ENCODE measurements at regions of chr15 and their contacts with region 1.

Region 1: DNA sequence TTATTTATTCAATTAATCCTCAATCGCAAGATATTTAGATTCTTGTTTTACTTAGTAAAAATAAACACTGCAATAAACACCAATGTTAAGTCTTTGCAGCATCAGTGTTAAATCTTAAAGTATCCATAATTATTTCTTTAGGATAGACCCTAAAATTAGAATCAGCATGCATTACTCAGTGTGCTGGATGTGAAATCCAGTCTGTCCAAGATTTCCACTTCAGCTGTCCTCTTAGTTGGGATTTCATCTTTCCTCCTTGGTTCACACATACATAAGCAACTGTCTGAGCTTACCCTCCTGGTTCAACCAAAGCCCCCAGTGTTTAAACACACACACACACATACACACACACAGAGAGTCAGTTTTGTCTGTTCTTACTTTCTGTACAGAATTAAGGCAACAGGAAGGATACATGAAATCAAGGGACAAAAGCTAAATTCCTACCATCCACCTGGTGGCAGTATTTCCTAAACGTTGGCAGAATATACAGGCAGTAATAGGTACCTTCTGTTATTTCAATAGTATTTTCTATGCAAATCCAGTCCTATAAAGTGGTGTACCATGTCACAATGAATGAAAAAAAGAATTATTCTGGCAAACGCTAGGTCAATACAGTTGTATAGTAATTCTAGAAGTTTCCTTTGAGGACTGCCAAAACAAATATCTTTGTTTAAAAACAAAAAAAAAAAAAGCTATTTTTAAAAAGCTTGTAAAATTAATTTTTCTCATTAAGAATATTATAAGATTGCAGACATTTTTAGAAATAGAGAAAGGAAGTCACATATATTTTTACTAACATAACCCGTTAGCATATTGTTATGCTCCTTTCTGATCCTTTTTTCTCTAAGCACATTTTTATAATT is 27.3 kb upstream of the DMXL2 start:
- DNase-seq: peak; percentile 71
- H3K4me3 ChIP-seq: peak overlapping the region in 1 of 2 experiments; percentile 18; a peak in 1 of 4 replicates
- H3K27ac ChIP-seq: no peak overlapping the region
- H3K4me1 ChIP-seq: peaks cover 0 to 2% of the 10 kb centered on the region in 2 experiments; a peak in 2 of 4 replicates
- H3K27me3 ChIP-seq: no peaks in the 10 kb centered on the region
- CTCF ChIP-seq: peak; percentile 88
- EP300 ChIP-seq: no peak
- RAD21 ChIP-seq: peak; percentile 99

Region 2: GRCh38 chr15:51622604-51623370 is 27.1 kb before region 1 on chr15 and contains the start of gene DMXL2:
- CTCF ChIA-PET with region 1: interaction called, 10 read pairs
- POLR2A ChIA-PET with region 1: no interaction called
- DNase-seq: peak; percentile 95
- H3K4me3 ChIP-seq: peak within 1 kb of the TSS; percentile 85 to 96
- H3K27ac ChIP-seq: peak within 1 kb of the TSS; percentile 64 to 90
- H3K4me1 ChIP-seq: peaks cover 11 to 12% of the 10 kb centered on the region in 2 experiments; a peak in 3 of 4 replicates
- H3K27me3 ChIP-seq: no peaks in the 10 kb centered on the region
- CTCF ChIP-seq: no peak
- EP300 ChIP-seq: peak in 1 of 2 experiments; percentile 35; a peak in 1 of 4 replicates
- RAD21 ChIP-seq: no peak
- polyA plus RNA-seq, gene DMXL2: 6.4 and 8.9 TPM in 2 replicates

Region 3: GRCh38 chr15:51681303-51681963 is 31.5 kb after region 1 on chr15 and contains the start of gene SCG3:
- CTCF ChIA-PET with region 1: interaction called, 14 read pairs
- POLR2A ChIA-PET with region 1: interaction called, 5 read pairs
- DNase-seq: peak; percentile 80
- H3K4me3 ChIP-seq: peak within 1 kb of the TSS; percentile 31 to 48; a peak in 3 of 4 replicates
- H3K27ac ChIP-seq: peak within 1 kb of the TSS in 1 of 2 experiments; percentile 64; a peak in 2 of 4 replicates
- H3K4me1 ChIP-seq: peaks cover 0 to 5% of the 10 kb centered on the region in 2 experiments; a peak in 2 of 4 replicates
- H3K27me3 ChIP-seq: no peaks in the 10 kb centered on the region; the same call in 1 of the 2 replicates
- CTCF ChIP-seq: no peak
- EP300 ChIP-seq: no peak
- RAD21 ChIP-seq: peak; percentile 2; the same call in 1 of the 2 replicates
- polyA plus RNA-seq, gene SCG3: 0.16 and 0.41 TPM in 2 replicates

Region 4: GRCh38 chr15:51737280-51738017 is 87.6 kb after region 1 on chr15 and contains the start of gene LYSMD2:
- CTCF ChIA-PET with region 1: interaction called, 53 read pairs
- POLR2A ChIA-PET with region 1: no interaction called
- DNase-seq: peak; percentile 87
- H3K4me3 ChIP-seq: peak within 1 kb of the TSS; percentile 65 to 74
- H3K27ac ChIP-seq: peak within 1 kb of the TSS in 1 of 2 experiments; percentile 87; a peak in 2 of 4 replicates
- H3K4me1 ChIP-seq: peaks cover 0 to 23% of the 10 kb centered on the region in 2 experiments; a peak in 2 of 4 replicates
- H3K27me3 ChIP-seq: no peaks in the 10 kb centered on the region
- CTCF ChIP-seq: no peak
- EP300 ChIP-seq: no peak
- RAD21 ChIP-seq: no peak
- polyA plus RNA-seq, gene LYSMD2: 10.3 and 14.2 TPM in 2 replicates

Region 5: DNA sequence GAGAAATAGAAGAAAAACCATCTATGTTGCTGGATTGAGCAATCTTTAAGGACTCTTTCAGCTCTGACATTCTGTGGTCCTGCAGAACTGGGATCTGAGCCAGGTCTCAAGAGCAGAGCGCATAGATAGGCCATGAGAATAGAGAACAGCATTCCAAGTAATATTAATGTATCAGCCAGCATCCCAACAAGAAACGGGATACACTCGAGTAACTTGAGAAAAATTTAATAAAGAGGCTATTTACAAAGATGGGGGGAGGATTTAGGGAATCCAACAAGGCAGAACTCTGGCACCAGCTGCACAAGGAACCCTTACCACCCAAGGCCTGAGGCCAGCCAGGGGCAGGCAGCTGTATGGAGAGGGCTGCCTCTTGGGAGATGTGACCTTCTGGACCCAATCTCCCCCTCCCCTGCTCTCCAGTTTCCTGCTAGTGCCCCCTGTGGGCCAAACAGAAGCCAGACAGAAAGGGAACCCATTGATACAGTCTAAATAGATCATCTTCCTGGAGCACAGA is 109.7 kb after region 1 on chr15:
- CTCF ChIA-PET with region 1: interaction called, 12 read pairs
- POLR2A ChIA-PET with region 1: no interaction called
- DNase-seq: no peak
- H3K4me3 ChIP-seq: no peak overlapping the region
- H3K27ac ChIP-seq: peak overlapping the region; percentile 80 to 82
- H3K4me1 ChIP-seq: peaks cover 11 to 18% of the 10 kb centered on the region in 2 experiments
- H3K27me3 ChIP-seq: no peaks in the 10 kb centered on the region
- CTCF ChIP-seq: peak; percentile 66
- EP300 ChIP-seq: peak; percentile 6 to 79; a peak in 2 of 4 replicates
- RAD21 ChIP-seq: peak; percentile 33; the same call in 1 of the 2 replicates

Region 6: DNA sequence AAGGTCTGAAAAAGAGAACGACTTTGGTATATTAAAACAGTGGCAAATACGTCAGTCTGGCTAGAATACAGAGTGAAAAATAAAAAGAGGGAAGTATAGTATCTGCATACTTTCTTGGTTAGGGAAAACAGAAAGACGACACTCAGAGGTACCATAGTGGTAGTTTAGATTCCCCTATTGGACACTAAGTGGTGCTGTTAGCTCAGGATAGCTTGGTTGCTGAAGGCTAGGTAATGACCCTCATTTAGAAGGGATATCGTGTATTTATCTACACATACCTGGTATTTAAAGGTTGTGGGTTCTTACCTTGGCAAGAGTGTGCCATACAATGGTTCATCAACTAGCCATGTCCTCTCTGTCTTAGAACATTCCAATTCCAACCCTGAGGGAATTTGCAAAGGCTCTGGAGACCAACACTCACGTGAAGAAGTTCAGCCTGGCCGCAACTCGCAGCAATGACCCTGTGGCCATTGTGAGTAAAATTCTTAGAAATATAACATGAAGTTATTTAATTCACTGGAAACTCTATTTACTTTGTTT is 132.5 kb after region 1 on chr15:
- CTCF ChIA-PET with region 1: interaction called, 313 read pairs
- POLR2A ChIA-PET with region 1: interaction called, 11 read pairs
- DNase-seq: peak; percentile 21
- H3K4me3 ChIP-seq: no peak overlapping the region
- H3K27ac ChIP-seq: no peak overlapping the region
- H3K4me1 ChIP-seq: no peaks in the 10 kb centered on the region
- H3K27me3 ChIP-seq: no peaks in the 10 kb centered on the region
- CTCF ChIP-seq: peak; percentile 31
- EP300 ChIP-seq: no peak
- RAD21 ChIP-seq: peak; percentile 53

Measured in SK-N-SH (cell line).